ENCODE measurements at regions of chr12 and their contacts with region 1.

Region 1: GRCh38 chr12:2179953-2180736 is 127.4 kb downstream of the CACNA1C start:
- DNase-seq: no peak
- H3K4me3 ChIP-seq: no peak overlapping the region
- H3K4me3 Mint-ChIP-seq: no peak overlapping the region
- H3K27ac Mint-ChIP-seq: no peak overlapping the region
- H3K4me1 ChIP-seq: no peaks in the 10 kb centered on the region
- H3K4me1 Mint-ChIP-seq: peaks cover 6% of the 10 kb centered on the region
- H3K27me3 ChIP-seq: peaks cover 2% of the 10 kb centered on the region; the same call in 1 of the 2 replicates
- H3K27me3 Mint-ChIP-seq: peaks cover 32% of the 10 kb centered on the region
- CTCF ChIP-seq: no peak

Region 2: GRCh38 chr12:1880153-1880845 is 299.8 kb before region 1 on chr12:
- CTCF ChIA-PET with region 1: no interaction called
- POLR2A ChIA-PET with region 1: no interaction called
- intact Hi-C with region 1: no loop called
- DNase-seq: peak in 1 of 2 experiments; percentile 19
- H3K4me3 ChIP-seq: no peak overlapping the region
- H3K4me3 Mint-ChIP-seq: no peak overlapping the region
- H3K27ac Mint-ChIP-seq: no peak overlapping the region
- H3K4me1 ChIP-seq: no peaks in the 10 kb centered on the region; the same call in 1 of the 2 replicates
- H3K4me1 Mint-ChIP-seq: no peaks in the 10 kb centered on the region
- H3K27me3 ChIP-seq: no peaks in the 10 kb centered on the region
- H3K27me3 Mint-ChIP-seq: peaks cover 8% of the 10 kb centered on the region
- CTCF ChIP-seq: no peak

Region 3: DNA sequence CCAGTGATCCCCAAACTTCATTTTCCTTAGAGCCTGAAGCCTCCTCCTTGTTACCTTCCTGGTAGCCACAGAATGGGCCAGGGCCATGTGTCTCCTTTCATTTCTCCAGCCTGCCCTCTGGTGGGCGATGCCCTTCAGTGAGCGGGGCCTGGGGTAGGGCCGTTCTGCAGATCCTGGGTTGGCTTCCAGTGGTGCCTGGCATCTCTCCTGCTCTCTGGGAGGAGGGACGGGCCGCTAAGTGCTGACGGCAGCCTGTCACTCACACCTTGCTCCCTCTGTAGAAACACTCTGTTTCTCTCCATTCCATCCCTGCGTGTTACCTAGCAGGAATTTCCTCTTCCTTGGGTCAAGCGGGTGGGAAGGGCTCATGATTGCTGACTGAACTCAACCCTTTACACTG is 104.7 kb after region 1 on chr12:
- CTCF ChIA-PET with region 1: interaction called, 7 read pairs
- POLR2A ChIA-PET with region 1: no interaction called
- intact Hi-C with region 1: loop called (anchors 5 kb)
- DNase-seq: peak; percentile 77 to 83
- H3K4me3 ChIP-seq: no peak overlapping the region
- H3K4me3 Mint-ChIP-seq: no peak overlapping the region
- H3K27ac Mint-ChIP-seq: no peak overlapping the region
- H3K4me1 ChIP-seq: no peaks in the 10 kb centered on the region
- H3K4me1 Mint-ChIP-seq: no peaks in the 10 kb centered on the region
- H3K27me3 ChIP-seq: 0 out of 2 replicates have a peak, but pooled peaks cover 2% of the 10 kb centered on the region
- H3K27me3 Mint-ChIP-seq: peaks cover 24% of the 10 kb centered on the region
- CTCF ChIP-seq: peak; percentile 74 to 89

Region 4: GRCh38 chr12:2291182-2291832 is 111.2 kb after region 1 on chr12:
- CTCF ChIA-PET with region 1: no interaction called
- POLR2A ChIA-PET with region 1: no interaction called
- intact Hi-C with region 1: loop called (anchors 1 kb)
- DNase-seq: peak; percentile 50 to 70
- H3K4me3 ChIP-seq: no peak overlapping the region
- H3K4me3 Mint-ChIP-seq: no peak overlapping the region
- H3K27ac Mint-ChIP-seq: no peak overlapping the region
- H3K4me1 ChIP-seq: no peaks in the 10 kb centered on the region
- H3K4me1 Mint-ChIP-seq: peaks cover 6% of the 10 kb centered on the region
- H3K27me3 ChIP-seq: peaks cover 5% of the 10 kb centered on the region; the same call in 1 of the 2 replicates
- H3K27me3 Mint-ChIP-seq: peaks cover 38% of the 10 kb centered on the region
- CTCF ChIP-seq: peak; percentile 85 to 91

Measured in Caco-2 (cell line).